ENCODE measurements at regions of chr12 and their contacts with region 1.

Region 1: GRCh38 chr12:93502802-93503623 is 35.7 kb downstream of the MRPL42 start:
- DNase-seq: no peak
- ATAC-seq: no peak
- H3K4me3 Mint-ChIP-seq: no peak overlapping the region
- H3K27ac Mint-ChIP-seq: no peak overlapping the region
- H3K4me1 Mint-ChIP-seq: no peaks in the 10 kb centered on the region
- H3K27me3 Mint-ChIP-seq: no peaks in the 10 kb centered on the region
- CTCF ChIP-seq: peak; percentile 78

Region 2: GRCh38 chr12:93742110-93742934 is 239.3 kb after region 1 on chr12:
- CTCF ChIA-PET with region 1: interaction called, 5 read pairs
- POLR2A ChIA-PET with region 1: no interaction called
- intact Hi-C with region 1: loop called (anchors 1 kb)
- DNase-seq: peak; percentile 56
- ATAC-seq: peak; percentile 93
- H3K4me3 Mint-ChIP-seq: peak overlapping the region; percentile 87
- H3K27ac Mint-ChIP-seq: peak overlapping the region; percentile 84
- H3K4me1 Mint-ChIP-seq: peaks cover 41% of the 10 kb centered on the region
- H3K27me3 Mint-ChIP-seq: no peaks in the 10 kb centered on the region
- CTCF ChIP-seq: no peak

Region 3: GRCh38 chr12:94074980-94075928 is 572.2 kb after region 1 on chr12:
- CTCF ChIA-PET with region 1: interaction called, 16 read pairs
- POLR2A ChIA-PET with region 1: no interaction called
- intact Hi-C with region 1: no loop called
- DNase-seq: no peak
- ATAC-seq: no peak
- H3K4me3 Mint-ChIP-seq: no peak overlapping the region
- H3K27ac Mint-ChIP-seq: no peak overlapping the region
- H3K4me1 Mint-ChIP-seq: no peaks in the 10 kb centered on the region
- H3K27me3 Mint-ChIP-seq: peaks cover 31% of the 10 kb centered on the region
- CTCF ChIP-seq: no peak

Region 4: GRCh38 chr12:94435511-94435927 is 932.5 kb after region 1 on chr12:
- CTCF ChIA-PET with region 1: interaction called, 3 read pairs
- POLR2A ChIA-PET with region 1: no interaction called
- intact Hi-C with region 1: loop called (anchors 5 kb)
- DNase-seq: no peak
- ATAC-seq: no peak
- H3K4me3 Mint-ChIP-seq: no peak overlapping the region
- H3K27ac Mint-ChIP-seq: no peak overlapping the region
- H3K4me1 Mint-ChIP-seq: peaks cover 12% of the 10 kb centered on the region
- H3K27me3 Mint-ChIP-seq: no peaks in the 10 kb centered on the region
- CTCF ChIP-seq: no peak